ENCODE measurements at regions of chr4 and their contacts with region 1.

Region 1: GRCh38 chr4:67545199-67546003 is at the start of gene CENPC:
- DNase-seq: peak; percentile 98
- ATAC-seq: peak; percentile 97
- H3K4me3 Mint-ChIP-seq: peak within 1 kb of the TSS; percentile 98
- H3K27ac Mint-ChIP-seq: peak within 1 kb of the TSS; percentile 98
- H3K4me1 Mint-ChIP-seq: peaks cover 37% of the 10 kb centered on the region
- H3K27me3 Mint-ChIP-seq: no peaks in the 10 kb centered on the region
- CTCF ChIP-seq: no peak
- total RNA-seq, gene CENPC: 29.1 to 32.0 TPM

Region 2: DNA sequence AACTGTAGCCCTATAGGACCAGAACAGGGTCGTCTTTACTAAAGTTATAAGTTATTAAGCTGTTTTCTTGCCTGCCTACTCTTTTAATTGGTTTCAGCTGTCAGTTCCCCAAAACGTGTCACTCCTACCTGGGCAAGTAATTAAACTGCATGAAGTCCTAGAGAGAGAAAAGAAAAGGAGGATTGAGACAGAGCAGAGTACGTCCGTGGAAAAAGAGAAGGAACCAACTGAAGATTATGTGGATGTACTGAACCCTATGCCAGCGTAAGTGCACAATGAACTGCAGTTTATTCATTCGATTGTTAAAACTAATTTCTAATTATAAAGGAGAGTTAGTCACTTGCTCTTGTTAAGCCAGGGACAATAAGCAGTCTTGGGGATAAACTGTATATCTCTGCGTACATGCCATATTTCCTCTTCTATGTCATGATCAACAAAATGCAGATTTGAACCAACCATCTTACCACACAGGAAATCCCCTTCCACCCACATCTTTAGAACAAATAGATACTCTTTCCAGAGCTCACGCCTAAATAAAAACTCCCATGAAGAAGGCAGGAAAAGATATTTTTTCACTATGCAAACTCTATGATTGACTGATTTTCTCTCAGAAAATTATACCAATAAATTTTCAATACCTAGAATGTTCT is 35.9 kb after region 1 on chr4:
- CTCF ChIA-PET with region 1: no interaction called
- POLR2A ChIA-PET with region 1: no interaction called
- intact Hi-C with region 1: loop called (anchors 5 kb)
- DNase-seq: peak; percentile 28
- ATAC-seq: peak; percentile 81
- H3K4me3 Mint-ChIP-seq: peak overlapping the region; percentile 20
- H3K27ac Mint-ChIP-seq: peak overlapping the region; percentile 80
- H3K4me1 Mint-ChIP-seq: peaks cover 20% of the 10 kb centered on the region
- H3K27me3 Mint-ChIP-seq: no peaks in the 10 kb centered on the region
- CTCF ChIP-seq: no peak

Region 3: DNA sequence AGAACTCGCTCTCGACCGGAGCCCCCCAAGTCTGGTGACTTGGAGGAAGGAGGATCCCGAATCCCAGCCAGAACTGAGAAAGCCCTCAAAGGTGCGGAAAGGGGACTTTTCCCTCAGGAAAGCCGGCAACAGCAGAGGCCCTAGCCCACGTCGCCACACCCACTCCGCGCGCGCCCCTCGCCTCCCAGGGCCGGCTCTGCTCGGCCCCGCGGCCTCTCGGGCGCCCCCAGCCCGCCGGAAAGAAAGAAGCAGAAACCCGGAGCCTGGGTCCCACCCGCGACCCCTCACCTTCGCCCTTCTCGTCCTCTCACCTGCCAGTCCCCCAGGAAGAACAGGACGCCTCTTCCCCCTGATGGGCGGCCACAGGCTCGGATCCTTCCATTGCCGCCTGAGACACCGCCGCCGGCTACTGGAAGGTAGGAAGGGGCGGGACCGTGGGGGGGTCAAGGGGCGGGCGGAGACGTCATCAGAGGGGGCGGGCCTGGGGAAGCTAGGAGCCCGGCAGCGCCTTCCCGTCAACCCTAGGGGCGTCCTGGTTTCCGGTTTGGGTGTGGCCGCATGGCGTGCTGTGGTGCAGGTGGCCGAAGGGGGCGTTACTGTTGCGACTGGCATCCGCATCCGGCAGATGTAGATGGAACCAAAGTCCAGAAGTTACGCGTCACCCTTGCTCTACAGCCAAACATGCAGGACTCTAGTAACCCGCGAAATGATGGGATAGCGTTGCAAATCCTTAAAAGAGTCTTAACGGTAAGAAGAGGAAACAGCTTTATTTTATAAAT is 155.5 kb after region 1 on chr4 and contains the start of gene UBA6:
- CTCF ChIA-PET with region 1: interaction called, 11 read pairs
- POLR2A ChIA-PET with region 1: interaction called, 4 read pairs
- intact Hi-C with region 1: loop called (anchors 5 kb)
- DNase-seq: peak; percentile 97
- ATAC-seq: peak; percentile 98
- H3K4me3 Mint-ChIP-seq: peak within 1 kb of the TSS; percentile 83
- H3K27ac Mint-ChIP-seq: peak within 1 kb of the TSS; percentile 97
- H3K4me1 Mint-ChIP-seq: peaks cover 57% of the 10 kb centered on the region
- H3K27me3 Mint-ChIP-seq: no peaks in the 10 kb centered on the region
- CTCF ChIP-seq: peak; percentile 43
- total RNA-seq, gene UBA6: 81.2 to 87.5 TPM

Region 4: DNA sequence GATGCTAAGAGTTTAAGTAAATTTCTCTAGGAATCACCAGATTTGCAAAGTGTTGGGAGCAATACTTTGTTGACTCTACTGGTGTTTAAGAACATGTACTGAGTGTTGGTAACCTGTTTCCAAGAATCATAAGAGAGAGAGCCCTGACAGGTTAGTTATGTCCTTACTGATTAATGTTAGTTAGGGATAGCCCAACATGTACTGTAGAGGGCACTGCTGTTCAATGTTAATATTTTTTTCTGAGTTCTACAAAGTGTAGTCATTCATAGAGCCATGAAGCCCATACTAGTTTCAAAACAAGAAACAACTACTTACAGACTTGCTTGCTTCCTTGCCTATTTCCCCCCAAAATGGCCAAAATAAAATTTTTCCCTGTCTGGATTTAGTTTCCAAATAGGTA is 326.5 kb after region 1 on chr4:
- CTCF ChIA-PET with region 1: no interaction called
- POLR2A ChIA-PET with region 1: no interaction called
- intact Hi-C with region 1: no loop called
- DNase-seq: no peak
- ATAC-seq: peak; percentile 45
- H3K4me3 Mint-ChIP-seq: no peak overlapping the region
- H3K27ac Mint-ChIP-seq: no peak overlapping the region
- H3K4me1 Mint-ChIP-seq: no peaks in the 10 kb centered on the region
- H3K27me3 Mint-ChIP-seq: peaks cover 3% of the 10 kb centered on the region
- CTCF ChIP-seq: no peak

Region 5: DNA sequence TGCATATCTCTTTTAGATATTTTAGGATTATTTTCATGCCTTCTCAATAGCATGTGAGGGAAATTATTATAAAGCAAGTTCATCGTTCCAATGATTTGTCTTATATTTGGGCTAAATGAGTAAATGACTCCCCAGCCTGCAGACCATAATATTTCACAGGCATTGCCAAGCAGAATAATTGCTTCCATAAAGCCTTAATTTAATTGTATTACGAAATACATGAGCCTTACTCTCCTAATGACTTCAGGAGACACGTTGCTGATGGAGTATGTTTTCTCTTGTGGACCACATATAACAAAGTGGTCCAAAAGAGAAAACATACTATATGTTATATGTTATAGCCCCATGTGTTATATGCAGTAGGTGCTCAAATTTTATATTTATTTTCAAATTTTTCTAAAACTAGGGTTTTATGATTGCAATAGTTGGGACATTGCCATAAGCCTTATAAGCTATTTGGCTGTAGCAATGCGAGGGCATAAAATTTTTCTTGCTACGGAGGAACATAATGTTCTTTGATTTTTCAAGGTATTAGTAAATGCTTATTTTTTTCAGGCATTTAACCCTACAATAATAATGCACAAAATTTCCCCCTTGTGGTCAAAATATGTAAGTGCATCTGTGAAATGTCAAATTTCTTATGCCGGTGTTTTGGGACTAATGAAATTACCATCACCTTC is 364.6 kb after region 1 on chr4:
- CTCF ChIA-PET with region 1: interaction called, 4 read pairs
- POLR2A ChIA-PET with region 1: no interaction called
- intact Hi-C with region 1: loop called (anchors 2 kb)
- DNase-seq: no peak
- ATAC-seq: no peak
- H3K4me3 Mint-ChIP-seq: no peak overlapping the region
- H3K27ac Mint-ChIP-seq: no peak overlapping the region
- H3K4me1 Mint-ChIP-seq: no peaks in the 10 kb centered on the region
- H3K27me3 Mint-ChIP-seq: peaks cover 3% of the 10 kb centered on the region
- CTCF ChIP-seq: peak; percentile 88